ENCODE measurements at regions of chr7 and their contacts with region 1.

Region 1: DNA sequence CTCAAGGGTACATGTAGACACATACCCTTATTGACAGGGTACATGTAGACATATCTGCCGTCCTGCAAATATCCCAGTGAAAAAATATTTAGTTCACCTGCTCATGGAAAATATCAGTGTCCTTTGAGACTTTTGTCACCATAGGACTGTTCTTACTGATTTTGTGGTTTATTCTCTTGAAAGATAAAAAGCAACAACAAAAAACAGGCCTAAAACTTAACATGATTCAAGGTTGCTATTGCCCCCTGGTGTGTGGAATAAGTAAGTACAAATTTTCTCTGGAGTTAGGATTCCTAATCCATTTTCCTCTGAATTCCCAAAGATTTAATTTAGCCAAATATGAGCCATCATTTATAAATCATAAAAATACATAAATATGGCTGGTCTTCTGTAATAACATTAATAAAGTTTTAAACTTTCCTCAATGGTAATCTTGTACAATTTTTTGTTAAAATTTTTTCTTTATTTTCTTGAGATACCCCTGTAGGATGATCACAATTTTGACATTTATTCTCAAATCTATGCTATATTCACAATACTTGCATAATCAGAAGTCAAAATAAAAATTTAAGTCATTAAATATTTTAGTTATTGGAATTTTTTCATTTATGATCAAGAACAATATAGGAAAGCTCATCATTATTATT is 741.4 kb upstream of the POT1 start:
- DNase-seq: peak; percentile 9
- H3K4me3 ChIP-seq: no peak overlapping the region
- CTCF ChIP-seq: peak; percentile 43

Region 2: DNA sequence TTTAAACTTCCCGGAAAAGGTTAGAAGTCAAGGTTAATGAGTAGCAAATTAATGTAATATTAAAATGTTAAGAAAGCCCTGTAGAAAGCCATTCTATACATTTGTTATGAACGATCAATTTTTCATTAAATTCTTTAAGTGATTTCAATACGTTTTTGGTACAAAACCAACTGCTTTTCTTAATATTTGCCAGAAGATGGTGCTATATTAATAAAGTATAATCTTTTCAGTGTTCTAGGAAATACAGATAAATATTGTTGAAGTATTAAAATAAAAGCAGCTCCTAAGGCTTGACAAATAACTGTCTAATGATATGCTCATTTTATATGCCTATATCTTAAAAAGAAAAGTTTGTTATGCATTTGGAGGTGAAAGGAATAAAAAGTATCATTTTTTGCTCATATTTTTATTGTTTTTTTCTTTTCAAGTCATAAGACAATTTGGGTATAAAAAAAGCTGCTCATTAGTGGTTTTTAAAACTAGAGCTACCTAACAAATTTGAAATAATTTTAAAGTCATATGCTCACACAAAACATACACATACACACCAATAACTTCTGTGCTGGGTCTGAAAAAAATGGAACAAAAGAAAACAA is 611.1 kb before region 1 on chr7:
- in situ Hi-C with region 1: loop called (anchors 5 kb)
- DNase-seq: peak; percentile 8
- H3K4me3 ChIP-seq: no peak overlapping the region
- CTCF ChIP-seq: no peak

Region 3: DNA sequence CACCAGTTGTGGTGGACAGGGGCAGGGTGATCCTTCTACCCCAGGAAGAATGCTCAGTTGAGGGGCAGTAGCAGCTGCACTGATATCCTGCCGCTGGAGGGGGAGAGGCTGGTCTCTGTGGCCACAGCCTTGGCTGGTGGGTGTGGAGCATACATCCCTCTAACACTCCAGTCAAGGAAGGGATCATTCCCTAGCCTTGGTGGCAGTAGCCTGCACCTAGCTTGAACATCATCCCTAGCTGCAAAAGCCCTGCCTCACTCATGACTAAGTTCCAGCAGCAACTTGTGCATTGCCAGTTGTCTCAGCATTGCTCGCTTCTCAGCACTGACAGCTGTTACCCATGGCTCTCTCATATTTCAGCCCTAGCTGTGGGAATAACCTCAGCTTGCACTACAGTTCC is 52.5 kb before region 1 on chr7:
- in situ Hi-C with region 1: no loop called
- DNase-seq: no peak
- H3K4me3 ChIP-seq: no peak overlapping the region
- CTCF ChIP-seq: no peak

Region 4: GRCh38 chr7:126103582-126103981 is 432.5 kb after region 1 on chr7:
- in situ Hi-C with region 1: no loop called
- DNase-seq: no peak
- H3K4me3 ChIP-seq: no peak overlapping the region
- CTCF ChIP-seq: no peak